ENCODE measurements at regions of chr2 and their contacts with region 1.

Region 1: DNA sequence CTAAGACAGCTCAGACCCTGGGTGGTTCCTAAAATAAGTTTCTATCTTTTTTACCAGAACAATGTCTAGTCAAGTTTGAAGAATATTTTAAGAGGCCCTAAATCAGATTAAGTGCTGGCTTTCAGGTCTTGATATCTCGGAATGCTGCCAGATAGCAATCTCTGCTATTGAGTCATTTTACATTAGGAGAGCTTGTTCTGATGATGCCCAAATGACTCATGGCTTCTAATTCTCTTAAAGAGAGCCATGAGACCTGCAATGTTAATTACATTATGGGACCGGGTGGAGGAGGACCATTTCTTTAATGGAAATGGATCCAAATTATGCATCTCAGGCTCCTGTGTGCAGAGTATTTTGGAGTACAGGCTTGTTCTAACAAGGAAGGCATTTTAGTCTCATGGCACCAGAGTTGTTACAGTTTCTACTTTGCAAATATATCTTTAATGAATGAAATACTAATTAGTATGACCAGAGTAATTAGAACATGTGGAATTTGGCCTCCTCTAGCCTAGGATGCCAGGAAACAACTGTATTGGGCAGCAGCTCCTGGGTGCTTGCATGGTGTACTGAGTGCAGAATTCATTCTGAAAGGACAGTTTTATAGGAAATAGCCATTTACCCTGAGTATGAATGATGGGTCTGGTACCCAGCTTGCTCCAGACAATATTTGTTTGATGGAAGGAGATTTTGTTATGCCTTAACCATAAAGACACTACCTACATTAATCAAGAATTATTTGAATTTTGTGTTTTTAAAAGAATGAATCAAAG is 94.0 kb upstream of the SULT1C3 start:
- DNase-seq: no peak
- H3K4me3 ChIP-seq: no peak overlapping the region
- H3K27ac ChIP-seq: no peak overlapping the region
- H3K4me1 ChIP-seq: no peaks in the 10 kb centered on the region
- H3K27me3 ChIP-seq: no peaks in the 10 kb centered on the region
- CTCF ChIP-seq: no peak
- POLR2A ChIP-seq: no peak

Region 2: DNA sequence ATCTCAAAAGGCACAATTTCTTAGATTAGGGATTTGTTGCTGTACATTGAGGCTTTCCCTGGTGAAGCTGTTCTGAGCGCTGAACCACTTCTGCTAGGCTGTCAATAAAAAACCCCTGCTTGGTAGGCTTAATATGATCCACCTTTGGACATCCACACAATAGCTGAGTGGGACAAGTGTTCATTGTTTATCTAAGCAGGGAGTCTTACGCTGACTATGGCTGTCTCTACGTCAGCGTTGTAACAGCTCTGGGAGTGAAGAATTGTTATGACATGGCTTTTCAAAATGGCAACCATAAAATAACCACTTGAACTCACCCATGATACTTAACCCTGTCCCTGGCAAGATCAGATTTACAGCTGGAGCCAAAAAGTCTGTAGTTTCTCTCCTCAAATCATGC is 17.5 kb before region 1 on chr2:
- intact Hi-C with region 1: no loop called
- DNase-seq: no peak
- H3K4me3 ChIP-seq: no peak overlapping the region
- H3K27ac ChIP-seq: no peak overlapping the region
- H3K4me1 ChIP-seq: no peaks in the 10 kb centered on the region
- H3K27me3 ChIP-seq: no peaks in the 10 kb centered on the region
- CTCF ChIP-seq: no peak
- POLR2A ChIP-seq: no peak

Region 3: GRCh38 chr2:108215794-108216211 is 70.1 kb after region 1 on chr2:
- intact Hi-C with region 1: no loop called
- DNase-seq: no peak
- H3K4me3 ChIP-seq: peak overlapping the region in 1 of 3 donors; percentile 13
- H3K27ac ChIP-seq: no peak overlapping the region
- H3K4me1 ChIP-seq: no peaks in the 10 kb centered on the region
- H3K27me3 ChIP-seq: no peaks in the 10 kb centered on the region
- CTCF ChIP-seq: no peak
- POLR2A ChIP-seq: no peak

Region 4: DNA sequence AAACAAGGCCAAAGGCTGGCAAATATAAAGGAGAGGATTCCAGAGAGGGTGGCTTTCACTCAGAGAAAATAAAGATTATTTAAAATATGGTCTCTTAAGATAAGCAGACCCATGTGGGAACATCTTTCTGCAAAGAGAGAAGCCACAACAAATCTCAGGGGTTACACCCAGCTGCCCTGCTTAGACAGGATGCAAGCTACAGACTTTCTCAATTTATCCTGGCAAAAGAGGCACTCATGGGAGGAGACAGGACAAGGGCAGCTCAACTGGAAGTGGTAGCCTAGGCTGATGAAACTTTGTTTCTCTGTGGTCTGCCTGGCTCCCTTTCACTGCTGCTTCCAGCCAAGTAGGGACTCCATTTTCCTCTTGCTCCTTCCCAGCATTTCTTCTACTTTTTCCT is 206.1 kb after region 1 on chr2:
- intact Hi-C with region 1: no loop called
- DNase-seq: no peak
- H3K4me3 ChIP-seq: no peak overlapping the region
- H3K27ac ChIP-seq: no peak overlapping the region
- H3K4me1 ChIP-seq: no peaks in the 10 kb centered on the region
- H3K27me3 ChIP-seq: no peaks in the 10 kb centered on the region
- CTCF ChIP-seq: no peak
- POLR2A ChIP-seq: no peak

Region 5: GRCh38 chr2:108436976-108437375 is 291.2 kb after region 1 on chr2:
- intact Hi-C with region 1: loop called (anchors 5 kb)
- DNase-seq: no peak
- H3K4me3 ChIP-seq: no peak overlapping the region
- H3K27ac ChIP-seq: no peak overlapping the region
- H3K4me1 ChIP-seq: no peaks in the 10 kb centered on the region
- H3K27me3 ChIP-seq: no peaks in the 10 kb centered on the region
- CTCF ChIP-seq: no peak
- POLR2A ChIP-seq: no peak